Endothelial cell of umbilical vein (primary cell): ENCODE measurements at regions of chr7 and their contacts with region 1.

Region 1: DNA sequence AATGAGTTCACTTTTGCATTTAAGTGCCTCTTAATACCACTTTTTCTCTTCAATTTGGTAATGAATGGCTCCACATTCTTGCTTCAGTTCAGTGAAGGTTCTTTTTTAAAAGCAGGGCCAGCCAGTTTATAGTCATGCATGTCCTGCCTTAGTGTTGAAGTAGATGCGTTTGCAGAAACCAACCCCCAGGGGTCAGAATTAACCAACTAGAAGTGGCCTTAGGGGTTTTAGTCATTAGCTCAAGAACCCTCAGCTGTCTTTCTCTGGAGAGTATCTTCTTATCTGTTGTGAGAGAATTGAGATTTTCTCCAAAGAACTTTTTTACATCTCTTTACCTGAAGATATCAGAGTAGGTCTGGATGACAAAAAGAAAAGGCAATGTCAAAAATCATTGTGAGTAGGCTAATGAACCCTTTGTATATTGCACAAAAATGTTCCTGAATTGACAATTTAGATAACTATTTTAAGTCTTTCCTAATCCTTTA is 82.2 kb downstream of the PIK3CG start:
- DNase-seq: peak; percentile 83
- H3K4me3 ChIP-seq: no peak overlapping the region
- H3K27ac ChIP-seq: no peak overlapping the region
- H3K4me1 ChIP-seq: no peaks in the 10 kb centered on the region
- H3K27me3 ChIP-seq: peaks cover 5 to 8% of the 10 kb centered on the region in 2 experiments
- CTCF ChIP-seq: peak; percentile 64 to 69
- POLR2A ChIP-seq: no peak

Region 2: GRCh38 chr7:106488465-106488864 is 458.8 kb before region 1 on chr7:
- CTCF ChIA-PET with region 1: no interaction called
- POLR2A ChIA-PET with region 1: no interaction called
- dilution Hi-C with region 1: no loop called
- intact Hi-C with region 1: no loop called
- DNase-seq: no peak
- H3K4me3 ChIP-seq: no peak overlapping the region
- H3K27ac ChIP-seq: no peak overlapping the region
- H3K4me1 ChIP-seq: peaks cover 13% of the 10 kb centered on the region
- H3K27me3 ChIP-seq: no peaks in the 10 kb centered on the region
- CTCF ChIP-seq: no peak
- POLR2A ChIP-seq: no peak

Region 3: GRCh38 chr7:106793015-106793975 is 154.0 kb before region 1 on chr7:
- CTCF ChIA-PET with region 1: interaction called, 20 read pairs
- POLR2A ChIA-PET with region 1: no interaction called
- dilution Hi-C with region 1: no loop called
- intact Hi-C with region 1: loop called (anchors 1 kb)
- DNase-seq: no peak
- H3K4me3 ChIP-seq: no peak overlapping the region
- H3K27ac ChIP-seq: no peak overlapping the region
- H3K4me1 ChIP-seq: no peaks in the 10 kb centered on the region
- H3K27me3 ChIP-seq: no peaks in the 10 kb centered on the region
- CTCF ChIP-seq: peak; percentile 24 to 36
- POLR2A ChIP-seq: no peak

Region 4: GRCh38 chr7:107025449-107026103 is 78.3 kb after region 1 on chr7:
- CTCF ChIA-PET with region 1: interaction called, 10 read pairs
- POLR2A ChIA-PET with region 1: no interaction called
- dilution Hi-C with region 1: no loop called
- intact Hi-C with region 1: no loop called
- DNase-seq: no peak
- H3K4me3 ChIP-seq: no peak overlapping the region
- H3K27ac ChIP-seq: no peak overlapping the region
- H3K4me1 ChIP-seq: no peaks in the 10 kb centered on the region
- H3K27me3 ChIP-seq: no peaks in the 10 kb centered on the region
- CTCF ChIP-seq: no peak
- POLR2A ChIP-seq: no peak

Region 5: DNA sequence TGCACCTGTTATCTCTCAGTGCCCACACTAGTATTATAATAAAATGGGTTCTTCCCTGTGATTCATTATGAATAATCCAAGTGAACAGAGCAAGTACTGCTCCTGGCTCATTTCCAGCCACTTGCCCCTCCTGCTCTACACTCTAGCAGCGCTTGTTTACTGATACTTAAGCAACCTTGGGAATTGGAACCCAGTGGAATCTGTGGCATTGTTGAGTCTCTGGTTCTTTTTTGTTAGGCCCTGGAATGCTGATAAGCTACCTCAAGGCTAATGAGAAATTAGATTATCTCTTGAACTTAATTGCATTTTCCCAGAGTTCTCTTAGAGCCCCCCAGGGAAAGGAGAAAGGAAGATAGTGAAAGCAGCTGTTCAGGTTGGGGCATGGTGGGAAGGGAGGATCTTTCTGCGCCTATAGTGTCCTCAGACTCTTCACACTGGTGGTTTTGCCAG is 131.3 kb after region 1 on chr7:
- CTCF ChIA-PET with region 1: interaction called, 13 read pairs
- POLR2A ChIA-PET with region 1: no interaction called
- dilution Hi-C with region 1: no loop called
- intact Hi-C with region 1: no loop called
- DNase-seq: peak; percentile 95
- H3K4me3 ChIP-seq: peak overlapping the region in 1 of 3 experiments; percentile 40
- H3K27ac ChIP-seq: peak overlapping the region; percentile 95
- H3K4me1 ChIP-seq: peaks cover 51% of the 10 kb centered on the region
- H3K27me3 ChIP-seq: no peaks in the 10 kb centered on the region
- CTCF ChIP-seq: no peak
- POLR2A ChIP-seq: peak; percentile 39

Region 6: DNA sequence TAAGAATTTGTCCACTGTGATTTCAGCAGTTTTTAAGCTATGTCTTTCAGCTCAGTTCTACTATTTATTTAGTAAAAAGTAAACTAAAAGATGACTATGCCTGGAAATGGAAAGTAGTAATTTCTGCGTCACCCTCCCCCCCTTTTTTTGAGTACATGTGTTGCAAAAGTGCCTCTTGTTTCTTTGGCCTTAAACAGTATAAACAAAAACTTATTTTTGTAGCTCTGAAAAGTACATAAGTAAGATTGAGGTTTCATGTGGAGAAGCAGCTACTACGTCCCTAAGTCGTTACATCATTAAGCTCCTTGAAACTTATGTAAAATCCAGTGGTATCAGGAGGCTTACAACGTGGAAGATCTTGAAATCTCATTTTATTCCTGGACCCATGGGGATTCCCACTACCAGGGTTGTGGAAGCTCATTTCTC is 175.2 kb after region 1 on chr7:
- CTCF ChIA-PET with region 1: interaction called, 12 read pairs
- POLR2A ChIA-PET with region 1: no interaction called
- dilution Hi-C with region 1: no loop called
- intact Hi-C with region 1: no loop called
- DNase-seq: no peak
- H3K4me3 ChIP-seq: no peak overlapping the region
- H3K27ac ChIP-seq: no peak overlapping the region
- H3K4me1 ChIP-seq: peaks cover 9% of the 10 kb centered on the region
- H3K27me3 ChIP-seq: no peaks in the 10 kb centered on the region
- CTCF ChIP-seq: no peak
- POLR2A ChIP-seq: no peak

Region 7: GRCh38 chr7:107150375-107151073 is 203.2 kb after region 1 on chr7:
- CTCF ChIA-PET with region 1: interaction called, 440 read pairs
- POLR2A ChIA-PET with region 1: no interaction called
- dilution Hi-C with region 1: no loop called
- intact Hi-C with region 1: loop called (anchors 1 kb)
- DNase-seq: peak; percentile 89
- H3K4me3 ChIP-seq: no peak overlapping the region
- H3K27ac ChIP-seq: peak overlapping the region; percentile 20
- H3K4me1 ChIP-seq: peaks cover 13% of the 10 kb centered on the region
- H3K27me3 ChIP-seq: no peaks in the 10 kb centered on the region
- CTCF ChIP-seq: peak; percentile 28 to 35
- POLR2A ChIP-seq: no peak

Region 8: GRCh38 chr7:107194049-107194448 is 246.8 kb after region 1 on chr7:
- CTCF ChIA-PET with region 1: interaction called, 19 read pairs
- POLR2A ChIA-PET with region 1: no interaction called
- dilution Hi-C with region 1: no loop called
- intact Hi-C with region 1: no loop called
- DNase-seq: no peak
- H3K4me3 ChIP-seq: no peak overlapping the region
- H3K27ac ChIP-seq: no peak overlapping the region
- H3K4me1 ChIP-seq: peaks cover 4% of the 10 kb centered on the region
- H3K27me3 ChIP-seq: no peaks in the 10 kb centered on the region
- CTCF ChIP-seq: no peak
- POLR2A ChIP-seq: no peak